A549 (cell line): ENCODE measurements at regions of chr2 and their contacts with region 1.

Region 1: DNA sequence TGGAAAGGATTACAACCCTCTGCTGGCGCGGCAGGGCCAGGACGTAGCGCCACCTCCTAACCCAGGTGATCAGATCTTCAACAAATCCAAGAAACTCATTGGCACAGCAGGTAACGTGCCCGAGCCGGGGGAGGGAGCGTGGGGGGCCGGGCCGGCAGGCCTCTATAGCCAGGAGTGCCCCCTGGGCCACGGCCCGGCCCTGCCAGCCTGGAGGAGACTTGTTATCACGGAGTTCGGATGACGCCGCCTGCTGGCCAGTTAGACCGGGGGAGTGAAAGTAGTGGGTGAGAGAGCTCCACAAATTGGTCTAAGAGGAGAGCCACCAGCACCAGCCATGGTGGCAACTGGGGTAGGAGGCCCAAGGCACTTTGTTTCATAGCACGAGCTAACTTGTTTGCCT is 8.6 kb upstream of the TMEM214 start:
- DNase-seq: peak; percentile 50 to 58
- ATAC-seq: peak; percentile 9 to 76; a peak in 3 of 6 replicates
- H3K4me3 ChIP-seq: no peak overlapping the region
- H3K27ac ChIP-seq: no peak overlapping the region
- H3K4me1 ChIP-seq: peaks cover 21% of the 10 kb centered on the region
- CTCF ChIP-seq: peak; percentile 40
- EP300 ChIP-seq: no peak
- POLR2A ChIP-seq: no peak
- RAD21 ChIP-seq: 0 out of 5 replicates have a peak, but pooled peaks of 1 of the 2 experiments have one; percentile 13

Region 2: DNA sequence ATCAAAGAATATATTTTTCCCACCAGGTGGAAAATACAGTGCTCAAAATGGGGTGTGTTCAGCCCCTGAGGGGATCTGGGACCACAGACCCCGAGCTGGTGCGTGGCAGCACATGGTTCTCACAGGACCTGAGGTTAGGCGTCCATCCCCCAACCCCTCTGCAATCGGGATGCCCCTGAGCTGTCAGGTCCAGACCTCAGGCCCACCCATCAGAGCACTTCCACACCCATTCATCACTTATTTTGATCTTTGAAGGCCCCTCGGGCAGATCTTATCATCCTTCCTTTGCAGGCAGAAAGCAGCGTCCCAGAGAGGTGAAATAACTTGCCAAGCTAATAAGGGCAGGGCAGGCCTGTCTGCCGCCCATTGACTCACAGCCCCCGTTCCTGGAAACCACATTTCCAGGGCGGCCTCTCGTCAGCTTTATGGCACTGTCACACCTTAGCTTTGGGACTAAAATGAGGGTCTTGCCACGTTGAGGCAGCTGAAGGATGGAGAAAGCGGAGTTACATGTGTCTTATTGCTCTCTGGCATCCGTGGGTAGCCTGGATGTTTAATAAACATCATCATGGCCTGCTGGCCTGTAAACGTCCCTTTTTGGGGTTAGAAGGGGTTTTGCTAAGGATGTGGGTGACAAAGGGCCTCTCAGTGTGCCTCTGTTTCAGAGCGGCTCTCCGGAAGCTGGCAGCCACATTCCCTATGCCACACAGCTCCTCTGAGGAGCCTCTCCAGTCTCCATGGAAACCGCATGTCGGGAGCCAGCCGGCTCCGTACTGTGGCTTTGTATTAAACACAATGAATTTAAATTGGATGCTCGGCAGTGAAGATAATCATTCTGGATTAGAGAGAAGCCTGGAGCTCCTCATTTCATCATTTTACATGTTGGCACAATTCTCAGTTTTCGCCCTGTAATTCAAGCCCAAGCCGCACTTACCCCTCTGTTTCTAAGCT is 112.0 kb before region 1 on chr2:
- CTCF ChIA-PET with region 1: no interaction called
- POLR2A ChIA-PET with region 1: no interaction called
- DNase-seq: no peak
- ATAC-seq: no peak
- H3K4me3 ChIP-seq: no peak overlapping the region
- H3K27ac ChIP-seq: no peak overlapping the region
- H3K4me1 ChIP-seq: no peaks in the 10 kb centered on the region
- CTCF ChIP-seq: no peak
- EP300 ChIP-seq: no peak
- POLR2A ChIP-seq: no peak
- RAD21 ChIP-seq: no peak

Region 3: GRCh38 chr2:26970244-26970920 is 53.8 kb before region 1 on chr2 and contains the start of gene MAPRE3:
- CTCF ChIA-PET with region 1: interaction called, 758 read pairs
- POLR2A ChIA-PET with region 1: no interaction called
- DNase-seq: peak; percentile 83 to 95
- ATAC-seq: peak; percentile 89 to 95
- H3K4me3 ChIP-seq: peak within 1 kb of the TSS; percentile 93
- H3K27ac ChIP-seq: peak within 1 kb of the TSS; percentile 79 to 87
- H3K4me1 ChIP-seq: peaks cover 26% of the 10 kb centered on the region
- CTCF ChIP-seq: no peak
- EP300 ChIP-seq: no peak
- POLR2A ChIP-seq: no peak; the same call in 1 of the 2 replicates
- RAD21 ChIP-seq: no peak
- polyA plus RNA-seq, gene MAPRE3: 12.0 and 12.1 TPM in 2 replicates

Region 4: DNA sequence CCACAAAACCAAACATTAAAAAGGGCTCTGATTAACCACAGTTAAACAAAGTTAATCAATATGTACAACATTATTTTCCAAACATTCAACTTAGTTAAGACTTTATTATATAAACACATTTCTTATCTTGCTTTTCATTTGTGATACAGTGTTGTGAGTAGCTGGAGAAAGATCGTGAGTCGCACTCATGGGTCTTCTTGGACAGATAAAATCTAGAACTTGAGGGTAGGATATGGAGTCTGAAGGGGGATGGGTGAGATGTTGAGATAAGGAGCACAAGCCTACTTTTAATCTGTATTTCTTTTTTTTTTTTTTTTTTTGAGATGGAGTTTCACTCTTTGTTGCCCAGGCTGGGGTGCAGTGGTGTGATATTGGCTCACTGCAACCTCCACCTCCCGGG is 14.0 kb before region 1 on chr2:
- CTCF ChIA-PET with region 1: interaction called, 75 read pairs
- POLR2A ChIA-PET with region 1: no interaction called
- DNase-seq: no peak
- ATAC-seq: no peak
- H3K4me3 ChIP-seq: no peak overlapping the region
- H3K27ac ChIP-seq: peak overlapping the region; percentile 60 to 79
- H3K4me1 ChIP-seq: peaks cover 30% of the 10 kb centered on the region
- CTCF ChIP-seq: no peak
- EP300 ChIP-seq: no peak
- POLR2A ChIP-seq: no peak
- RAD21 ChIP-seq: no peak

Region 5: DNA sequence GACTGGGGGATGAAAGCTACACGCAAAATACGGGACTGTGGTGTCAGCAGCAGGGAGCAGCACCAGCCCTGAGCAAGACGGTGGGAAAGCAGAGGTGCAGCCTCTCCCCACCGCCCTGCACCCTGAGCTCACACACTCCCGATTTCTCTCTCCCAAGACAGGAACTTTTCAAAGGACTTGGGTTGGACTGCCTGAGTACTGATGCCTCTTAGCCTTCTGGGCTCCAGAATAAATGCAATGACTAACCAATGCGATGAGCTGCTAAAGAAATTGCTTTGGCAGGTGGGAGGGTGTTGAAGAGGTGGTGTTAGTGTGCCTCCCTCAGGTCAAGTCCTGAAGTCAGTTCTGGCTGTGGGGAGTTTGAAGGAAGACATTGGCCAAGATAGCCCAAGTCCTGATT is 267.7 kb after region 1 on chr2:
- CTCF ChIA-PET with region 1: no interaction called
- POLR2A ChIA-PET with region 1: no interaction called
- DNase-seq: peak; percentile 36 to 66
- ATAC-seq: peak; percentile 77 to 79
- H3K4me3 ChIP-seq: no peak overlapping the region
- H3K27ac ChIP-seq: peak overlapping the region; percentile 19 to 49; a peak in 4 of 6 replicates
- H3K4me1 ChIP-seq: peaks cover 36% of the 10 kb centered on the region
- CTCF ChIP-seq: peak; percentile 36
- EP300 ChIP-seq: no peak
- POLR2A ChIP-seq: no peak
- RAD21 ChIP-seq: peak; percentile 57 to 68

Region 6: DNA sequence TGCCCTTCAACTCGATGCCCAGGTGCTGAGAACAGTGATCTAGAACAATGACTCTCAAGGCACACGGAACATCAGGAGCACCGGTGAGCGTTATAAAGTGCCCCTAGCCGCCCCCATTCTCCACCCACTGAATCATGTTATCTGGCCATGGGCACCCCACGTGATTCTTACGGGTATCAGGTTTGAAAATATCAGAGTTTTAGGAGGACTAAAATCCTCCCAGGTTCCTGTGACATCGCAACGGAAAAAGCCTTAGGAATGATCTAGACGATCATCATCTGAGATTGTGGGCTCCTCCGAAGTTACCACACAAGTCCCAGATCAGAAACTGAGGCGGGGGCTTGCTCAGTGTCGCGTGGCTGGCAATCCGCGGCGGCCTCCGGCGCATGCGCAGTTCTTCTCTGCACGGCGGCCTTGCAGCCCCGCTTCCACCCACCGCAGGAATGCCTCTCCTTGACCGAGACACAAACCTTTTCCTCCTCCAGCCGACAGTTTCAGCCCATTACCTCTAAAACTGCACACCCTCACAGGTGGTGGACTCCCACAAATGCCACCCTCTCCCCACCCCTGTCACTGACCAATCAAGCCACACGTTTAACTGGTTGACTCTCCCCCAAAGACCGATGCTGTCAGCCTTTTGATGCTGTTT is 741.6 kb after region 1 on chr2:
- CTCF ChIA-PET with region 1: no interaction called
- POLR2A ChIA-PET with region 1: no interaction called
- DNase-seq: peak in 1 of 2 experiments; percentile 37
- ATAC-seq: peak; percentile 55 to 57; a peak in 5 of 6 replicates
- H3K4me3 ChIP-seq: no peak overlapping the region
- H3K27ac ChIP-seq: peak overlapping the region; percentile 62 to 69
- H3K4me1 ChIP-seq: peaks cover 27% of the 10 kb centered on the region
- CTCF ChIP-seq: no peak
- EP300 ChIP-seq: no peak
- POLR2A ChIP-seq: no peak
- RAD21 ChIP-seq: no peak